ENCODE measurements at regions of chr11 and their contacts with region 1.

Region 1: DNA sequence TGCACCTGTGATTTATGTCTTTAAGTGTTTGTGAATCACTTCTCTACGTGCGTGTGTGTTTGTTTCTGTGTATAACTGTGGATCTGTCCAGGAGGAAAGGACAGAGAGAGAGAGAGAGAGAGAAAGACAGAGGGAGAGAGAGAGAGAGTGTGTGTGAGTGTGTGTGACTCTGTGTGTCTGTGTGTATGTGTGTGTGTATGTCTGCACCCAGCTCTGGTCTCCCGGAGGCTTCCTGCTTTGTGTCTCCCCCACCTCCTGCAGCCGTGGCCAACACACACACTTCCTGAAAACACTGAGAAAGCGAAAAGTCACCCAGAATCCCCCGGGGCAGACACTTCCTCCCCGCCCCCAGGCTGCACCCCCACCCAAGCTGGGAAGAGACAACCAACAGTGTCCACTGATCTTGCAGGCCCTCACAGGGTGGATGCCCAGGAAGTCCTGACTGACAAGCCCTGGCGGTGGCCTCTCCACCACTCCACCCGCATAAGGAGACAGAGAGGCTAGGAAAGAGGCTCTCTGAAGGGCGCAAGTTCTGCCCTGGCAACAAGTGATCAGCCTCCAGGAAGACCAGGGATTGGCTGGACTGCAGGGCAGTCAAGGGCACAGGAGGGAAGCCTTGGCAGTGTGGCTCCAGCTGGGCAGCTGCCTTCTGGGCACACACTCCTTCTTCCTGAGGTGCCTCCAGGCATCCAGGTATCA is 30.0 kb downstream of the ARAP1 start:
- DNase-seq: peak; percentile 78
- ATAC-seq: peak; percentile 88
- H3K4me3 Mint-ChIP-seq: peak overlapping the region; percentile 97
- H3K27ac Mint-ChIP-seq: peak overlapping the region; percentile 94
- H3K4me1 Mint-ChIP-seq: peaks cover 85% of the 10 kb centered on the region
- H3K27me3 Mint-ChIP-seq: no peaks in the 10 kb centered on the region
- CTCF ChIP-seq: no peak

Region 2: GRCh38 chr11:72752088-72752914 is 30.1 kb after region 1 on chr11 and contains the start of gene ARAP1:
- CTCF ChIA-PET with region 1: interaction called, 10 read pairs
- POLR2A ChIA-PET with region 1: interaction called, 7 read pairs
- intact Hi-C with region 1: loop called (anchors 1 kb)
- DNase-seq: peak; percentile 74
- ATAC-seq: peak; percentile 89
- H3K4me3 Mint-ChIP-seq: peak within 1 kb of the TSS; percentile 91
- H3K27ac Mint-ChIP-seq: peak within 1 kb of the TSS; percentile 89
- H3K4me1 Mint-ChIP-seq: peaks cover 53% of the 10 kb centered on the region
- H3K27me3 Mint-ChIP-seq: no peaks in the 10 kb centered on the region
- CTCF ChIP-seq: no peak
- total RNA-seq, gene ARAP1: 113 and 139 TPM in 2 replicates

Region 3: GRCh38 chr11:72793425-72794367 is 71.5 kb after region 1 on chr11 and contains the start of gene STARD10:
- CTCF ChIA-PET with region 1: interaction called, 144 read pairs
- POLR2A ChIA-PET with region 1: interaction called, 57 read pairs
- intact Hi-C with region 1: loop called (anchors 1 kb)
- DNase-seq: peak; percentile 94
- ATAC-seq: peak; percentile 93
- H3K4me3 Mint-ChIP-seq: peak within 1 kb of the TSS; percentile 99
- H3K27ac Mint-ChIP-seq: peak within 1 kb of the TSS; percentile 100
- H3K4me1 Mint-ChIP-seq: peaks cover 34% of the 10 kb centered on the region
- H3K27me3 Mint-ChIP-seq: no peaks in the 10 kb centered on the region
- CTCF ChIP-seq: peak; percentile 81
- total RNA-seq, gene STARD10: 42.6 and 46.8 TPM in 2 replicates

Region 4: GRCh38 chr11:72821883-72822799 is 99.9 kb after region 1 on chr11:
- CTCF ChIA-PET with region 1: interaction called, 10 read pairs
- POLR2A ChIA-PET with region 1: interaction called, 6 read pairs
- intact Hi-C with region 1: loop called (anchors 1 kb)
- DNase-seq: peak; percentile 90
- ATAC-seq: peak; percentile 82
- H3K4me3 Mint-ChIP-seq: peak overlapping the region; percentile 63
- H3K27ac Mint-ChIP-seq: peak overlapping the region; percentile 95
- H3K4me1 Mint-ChIP-seq: peaks cover 57% of the 10 kb centered on the region
- H3K27me3 Mint-ChIP-seq: no peaks in the 10 kb centered on the region
- CTCF ChIP-seq: no peak

Region 5: GRCh38 chr11:73177778-73178577 is 455.8 kb after region 1 on chr11:
- CTCF ChIA-PET with region 1: interaction called, 25 read pairs
- POLR2A ChIA-PET with region 1: no interaction called
- intact Hi-C with region 1: loop called (anchors 1 kb)
- DNase-seq: peak; percentile 72
- ATAC-seq: peak; percentile 94
- H3K4me3 Mint-ChIP-seq: no peak overlapping the region
- H3K27ac Mint-ChIP-seq: peak overlapping the region; percentile 87
- H3K4me1 Mint-ChIP-seq: peaks cover 42% of the 10 kb centered on the region
- H3K27me3 Mint-ChIP-seq: no peaks in the 10 kb centered on the region
- CTCF ChIP-seq: peak; percentile 43